Activated T-helper 2 cell treated with anti-CD3 and anti-CD28 coated beads, Interferon-gamma antibody, Interleukin-2, Interleukin-4, amounts not matched to agents 10 μg/mL and 5 μg/mL and 100 μg/mL, durations not matched to agents 14 hours and 24 hours and 36 hours (primary cell): ENCODE measurements at regions of chr1 and their contacts with region 1.

Region 1: DNA sequence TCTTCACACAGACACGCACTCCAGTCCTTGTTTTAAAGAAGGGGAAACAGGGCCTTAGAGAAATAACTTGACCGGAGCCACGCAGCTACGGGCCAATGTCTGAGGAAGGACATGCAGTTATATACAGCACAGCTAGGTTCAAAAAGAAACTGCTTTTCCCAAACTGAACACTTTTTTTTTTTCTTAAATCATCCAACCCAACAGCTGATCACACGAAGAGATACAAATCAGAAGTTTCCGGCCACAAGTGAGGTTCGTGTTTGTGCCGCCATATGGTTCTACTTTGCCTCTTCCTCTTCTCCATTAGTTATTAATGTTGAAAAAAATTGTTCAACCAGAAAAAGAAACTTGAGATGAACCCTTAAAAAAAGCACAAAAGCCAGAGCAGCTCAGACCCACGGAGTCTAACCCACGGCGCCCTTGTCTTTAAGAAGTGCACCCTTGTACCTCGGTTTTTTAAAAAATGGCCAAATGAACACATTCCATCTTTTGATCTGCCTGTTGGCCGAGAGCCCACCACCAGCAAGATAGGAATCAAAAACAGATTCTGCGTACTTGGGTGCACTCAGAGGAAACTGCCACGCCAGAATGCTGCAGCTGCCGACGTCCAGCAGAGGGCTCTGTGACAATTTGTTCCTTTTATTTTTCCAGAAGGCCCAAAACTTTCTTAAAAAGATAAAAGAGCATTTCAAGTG is 78.9 kb downstream of the SLC66A1 start:
- DNase-seq: peak; percentile 67
- H3K4me3 Mint-ChIP-seq: peak overlapping the region; percentile 69
- H3K27ac Mint-ChIP-seq: peak overlapping the region; percentile 91
- H3K4me1 Mint-ChIP-seq: peaks cover 57% of the 10 kb centered on the region
- H3K27me3 Mint-ChIP-seq: no peaks in the 10 kb centered on the region

Region 2: GRCh38 chr1:19582302-19582701 is 191.3 kb after region 1 on chr1:
- intact Hi-C with region 1: loop called (anchors 1 kb)
- DNase-seq: peak; percentile 63
- H3K4me3 Mint-ChIP-seq: no peak overlapping the region
- H3K27ac Mint-ChIP-seq: no peak overlapping the region
- H3K4me1 Mint-ChIP-seq: peaks cover 11% of the 10 kb centered on the region
- H3K27me3 Mint-ChIP-seq: peaks cover 8% of the 10 kb centered on the region

Region 3: GRCh38 chr1:19596714-19597495 is 205.9 kb after region 1 on chr1:
- intact Hi-C with region 1: loop called (anchors 5 kb)
- DNase-seq: peak; percentile 97
- H3K4me3 Mint-ChIP-seq: peak overlapping the region; percentile 98
- H3K27ac Mint-ChIP-seq: peak overlapping the region; percentile 99
- H3K4me1 Mint-ChIP-seq: peaks cover 37% of the 10 kb centered on the region
- H3K27me3 Mint-ChIP-seq: peaks cover 3% of the 10 kb centered on the region

Region 4: GRCh38 chr1:19643602-19644394 is 252.8 kb after region 1 on chr1 and contains the start of gene NBL1:
- intact Hi-C with region 1: loop called (anchors 2 kb)
- DNase-seq: peak; percentile 71
- H3K4me3 Mint-ChIP-seq: peak within 1 kb of the TSS; percentile 98
- H3K27ac Mint-ChIP-seq: peak within 1 kb of the TSS; percentile 83
- H3K4me1 Mint-ChIP-seq: peaks cover 28% of the 10 kb centered on the region
- H3K27me3 Mint-ChIP-seq: peaks cover 17% of the 10 kb centered on the region
- total RNA-seq, gene NBL1: 51.6 and 55.7 TPM in 2 replicates

Region 5: DNA sequence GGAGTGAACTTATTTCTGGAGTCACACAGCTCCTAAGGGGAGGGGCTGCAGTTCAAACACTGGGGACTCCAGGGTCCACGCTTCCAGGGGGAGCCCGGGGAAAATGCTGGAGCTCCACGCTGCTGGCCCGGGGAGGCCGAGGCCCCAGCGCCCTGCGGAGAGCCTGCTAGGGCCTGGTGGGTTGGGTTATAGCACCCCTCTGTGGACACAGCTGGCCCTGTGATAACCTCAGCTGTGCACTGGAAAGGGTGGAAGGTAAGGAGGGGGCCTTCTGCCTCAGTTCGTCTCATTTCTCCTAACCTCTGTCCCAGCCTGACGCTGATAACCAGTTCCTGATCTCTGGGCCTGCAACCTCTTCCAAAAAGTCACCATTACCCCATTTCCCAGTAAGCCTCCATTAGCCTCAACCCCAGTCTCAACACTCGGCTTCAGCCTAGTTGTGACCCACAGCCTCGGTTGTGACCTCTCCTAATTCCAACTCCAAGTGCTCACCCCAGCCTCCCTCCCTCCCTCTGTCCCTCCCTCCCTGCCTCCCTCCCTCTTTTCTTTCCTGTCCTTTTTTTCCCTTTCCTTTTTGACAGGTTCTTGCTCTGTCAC is 260.2 kb after region 1 on chr1:
- intact Hi-C with region 1: loop called (anchors 1 kb)
- DNase-seq: peak; percentile 41
- H3K4me3 Mint-ChIP-seq: no peak overlapping the region
- H3K27ac Mint-ChIP-seq: no peak overlapping the region
- H3K4me1 Mint-ChIP-seq: peaks cover 25% of the 10 kb centered on the region
- H3K27me3 Mint-ChIP-seq: no peaks in the 10 kb centered on the region